ENCODE measurements at regions of chr1 and their contacts with region 1.

Region 1: GRCh38 chr1:52002038-52002917 is 11.8 kb upstream of the RAB3B start:
- DNase-seq: peak; percentile 59 to 81 (median 72)
- H3K4me3 ChIP-seq: no peak overlapping the region
- H3K27ac ChIP-seq: no peak overlapping the region
- H3K4me1 ChIP-seq: peaks cover 6 to 11% of the 10 kb centered on the region in 2 donors
- H3K27me3 ChIP-seq: no peaks in the 10 kb centered on the region
- CTCF ChIP-seq: peak; percentile 86 to 96 (median 95)
- POLR2A ChIP-seq: no peak

Region 2: GRCh38 chr1:51768971-51769588 is 233.2 kb before region 1 on chr1:
- intact Hi-C with region 1: no loop called
- DNase-seq: peak in 5 of 7 donors; percentile 24 to 70 (median 42)
- H3K4me3 ChIP-seq: no peak overlapping the region
- H3K27ac ChIP-seq: no peak overlapping the region
- H3K4me1 ChIP-seq: no peaks in the 10 kb centered on the region
- H3K27me3 ChIP-seq: no peaks in the 10 kb centered on the region
- CTCF ChIP-seq: peak; percentile 77 to 90 (median 82)
- POLR2A ChIP-seq: no peak

Region 3: GRCh38 chr1:51863384-51863783 is 138.9 kb before region 1 on chr1:
- intact Hi-C with region 1: no loop called
- DNase-seq: no peak
- H3K4me3 ChIP-seq: no peak overlapping the region
- H3K27ac ChIP-seq: no peak overlapping the region
- H3K4me1 ChIP-seq: peaks cover 3 to 9% of the 10 kb centered on the region in 2 donors
- H3K27me3 ChIP-seq: no peaks in the 10 kb centered on the region
- CTCF ChIP-seq: no peak
- POLR2A ChIP-seq: no peak

Region 4: GRCh38 chr1:51897699-51898031 is 104.6 kb before region 1 on chr1:
- intact Hi-C with region 1: loop called (anchors 5 kb)
- DNase-seq: no peak
- H3K4me3 ChIP-seq: no peak overlapping the region
- H3K27ac ChIP-seq: no peak overlapping the region
- H3K4me1 ChIP-seq: no peaks in the 10 kb centered on the region
- H3K27me3 ChIP-seq: peaks cover 3% of the 10 kb centered on the region
- CTCF ChIP-seq: no peak
- POLR2A ChIP-seq: no peak

Region 5: DNA sequence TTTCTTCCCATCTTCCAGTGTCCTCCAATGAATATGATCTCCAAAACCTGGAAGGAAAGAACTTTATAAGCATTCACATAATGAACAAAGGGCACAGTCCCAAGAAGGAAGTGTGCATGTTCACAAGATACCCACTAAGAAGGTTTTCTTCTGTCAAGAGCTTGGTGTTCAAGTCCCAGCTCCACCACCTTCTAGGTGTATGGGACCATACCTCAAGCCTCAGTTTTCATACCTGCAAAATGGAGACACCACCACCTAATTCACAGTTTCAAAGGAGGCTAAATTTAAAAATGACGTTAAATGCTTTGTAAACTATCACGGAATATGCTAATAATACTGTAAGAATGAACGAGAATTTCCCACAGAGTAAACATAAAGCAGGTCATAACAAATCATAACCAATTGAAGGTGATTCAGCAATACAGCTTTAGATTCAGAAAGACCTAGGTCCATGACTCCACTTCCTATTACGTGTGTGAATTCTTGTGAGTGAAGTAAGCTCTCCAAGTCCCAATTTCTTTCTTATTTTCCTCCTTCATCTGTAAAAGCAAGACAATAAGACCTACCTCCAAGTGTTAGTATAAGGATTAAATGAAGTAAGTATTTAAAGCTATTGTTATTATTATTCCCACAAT is 39.4 kb after region 1 on chr1:
- intact Hi-C with region 1: no loop called
- DNase-seq: no peak
- H3K4me3 ChIP-seq: no peak overlapping the region
- H3K27ac ChIP-seq: no peak overlapping the region
- H3K4me1 ChIP-seq: no peaks in the 10 kb centered on the region
- H3K27me3 ChIP-seq: no peaks in the 10 kb centered on the region
- CTCF ChIP-seq: no peak
- POLR2A ChIP-seq: no peak

Measured in adrenal gland (tissue), 19 donors.